ENCODE measurements at regions of chrX and their contacts with region 1.

Region 1: GRCh38 chrX:70262952-70263567 is 3.1 kb upstream of the P2RY4 start:
- DNase-seq: peak; percentile 49
- H3K4me3 Mint-ChIP-seq: no peak overlapping the region
- H3K27ac Mint-ChIP-seq: no peak overlapping the region
- H3K4me1 Mint-ChIP-seq: no peaks in the 10 kb centered on the region
- H3K27me3 Mint-ChIP-seq: peaks cover 13% of the 10 kb centered on the region
- CTCF ChIP-seq: peak; percentile 61

Region 2: GRCh38 chrX:70196961-70197805 is 65.9 kb before region 1 on chrX:
- CTCF ChIA-PET with region 1: interaction called, 15 read pairs
- POLR2A ChIA-PET with region 1: no interaction called
- intact Hi-C with region 1: loop called (anchors 1 kb)
- DNase-seq: peak; percentile 76
- H3K4me3 Mint-ChIP-seq: no peak overlapping the region
- H3K27ac Mint-ChIP-seq: no peak overlapping the region
- H3K4me1 Mint-ChIP-seq: peaks cover 5% of the 10 kb centered on the region
- H3K27me3 Mint-ChIP-seq: peaks cover 48% of the 10 kb centered on the region
- CTCF ChIP-seq: peak; percentile 45

Region 3: DNA sequence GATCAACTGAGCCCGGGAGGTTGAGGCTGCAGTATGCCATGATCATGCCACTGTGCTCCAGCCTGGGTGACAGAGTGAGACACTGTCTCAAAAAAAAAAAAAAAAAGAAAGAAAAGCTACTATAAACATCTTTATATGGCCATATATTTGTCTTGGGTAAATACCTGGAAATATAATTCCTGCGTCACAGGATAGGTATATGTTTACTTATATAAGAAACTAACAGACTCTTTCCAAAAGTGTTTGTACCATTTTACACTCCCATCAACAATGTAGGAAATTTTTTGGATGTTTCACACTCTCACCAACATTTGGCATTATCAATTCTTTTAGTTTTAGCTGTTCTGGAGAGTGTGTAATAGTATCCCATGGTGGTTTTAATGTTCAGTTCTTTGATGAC is 15.8 kb before region 1 on chrX:
- CTCF ChIA-PET with region 1: no interaction called
- POLR2A ChIA-PET with region 1: no interaction called
- intact Hi-C with region 1: no loop called
- DNase-seq: no peak
- H3K4me3 Mint-ChIP-seq: no peak overlapping the region
- H3K27ac Mint-ChIP-seq: no peak overlapping the region
- H3K4me1 Mint-ChIP-seq: no peaks in the 10 kb centered on the region
- H3K27me3 Mint-ChIP-seq: peaks cover 11% of the 10 kb centered on the region
- CTCF ChIP-seq: no peak

Measured in MCF 10A (cell line).